Heart right ventricle (tissue), 16 donors: ENCODE measurements at regions of chr3 and their contacts with region 1.

Region 1: DNA sequence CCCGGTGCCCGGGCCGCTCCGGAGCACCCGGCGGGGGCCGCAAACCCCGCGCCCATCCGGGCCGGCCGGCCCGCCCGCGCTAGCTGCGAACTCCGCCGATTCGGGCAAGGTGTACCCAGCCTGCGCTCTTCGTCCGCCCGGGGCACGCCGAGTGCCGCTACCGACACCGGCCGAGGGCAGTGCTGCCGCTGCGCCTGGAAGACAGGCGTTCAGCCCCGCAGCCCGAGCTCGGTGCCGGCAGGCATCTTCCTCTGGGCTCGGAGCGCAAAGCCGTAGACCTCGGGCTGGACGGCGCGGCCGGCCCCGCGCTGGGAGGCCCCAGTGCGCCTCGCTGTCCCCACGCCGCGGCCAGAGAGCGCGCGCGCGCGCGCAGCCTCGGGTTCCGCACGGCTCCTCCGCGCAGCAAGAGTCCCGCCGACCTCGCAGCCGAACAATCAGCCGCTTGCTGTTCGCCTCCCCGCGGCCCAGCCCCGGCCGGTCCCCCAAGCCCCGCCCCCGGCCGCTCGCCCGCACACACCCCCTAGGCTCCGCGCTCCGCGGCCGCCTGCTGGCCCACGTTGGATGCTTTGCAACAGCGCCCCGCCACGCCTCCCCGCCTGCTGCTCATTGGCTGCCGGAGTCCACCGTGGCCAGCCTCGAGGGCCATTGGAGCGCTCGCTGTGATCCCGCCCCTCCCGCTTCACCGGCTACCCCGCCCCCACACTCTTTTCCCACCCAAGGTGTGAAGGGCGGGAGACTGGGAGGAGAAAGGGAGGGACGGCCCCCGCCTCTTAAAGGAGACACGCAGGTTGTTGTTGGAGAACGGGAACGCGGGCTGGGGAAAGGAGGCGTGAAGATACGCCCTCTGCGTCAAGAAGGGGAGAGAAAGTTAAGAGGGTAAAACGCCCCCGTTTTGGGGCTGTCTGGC is at the start of gene LRIG1:
- DNase-seq: peak; percentile 99 to 100
- ATAC-seq: peak; percentile 97 to 98 (median 98)
- H3K4me3 ChIP-seq: peak within 1 kb of the TSS; percentile 72 to 94 (median 90)
- H3K27ac ChIP-seq: peak within 1 kb of the TSS; percentile 88 to 96 (median 94)
- H3K4me1 ChIP-seq: peaks cover 4 to 44% (median 34%) of the 10 kb centered on the region in 9 donors
- H3K27me3 ChIP-seq: peaks cover 0 to 4% (median 0%) of the 10 kb centered on the region in 7 donors
- CTCF ChIP-seq: peak; percentile 30 to 73 (median 52)
- total RNA-seq, gene LRIG1: 71.9 to 109 (median 95.2) TPM

Region 2: DNA sequence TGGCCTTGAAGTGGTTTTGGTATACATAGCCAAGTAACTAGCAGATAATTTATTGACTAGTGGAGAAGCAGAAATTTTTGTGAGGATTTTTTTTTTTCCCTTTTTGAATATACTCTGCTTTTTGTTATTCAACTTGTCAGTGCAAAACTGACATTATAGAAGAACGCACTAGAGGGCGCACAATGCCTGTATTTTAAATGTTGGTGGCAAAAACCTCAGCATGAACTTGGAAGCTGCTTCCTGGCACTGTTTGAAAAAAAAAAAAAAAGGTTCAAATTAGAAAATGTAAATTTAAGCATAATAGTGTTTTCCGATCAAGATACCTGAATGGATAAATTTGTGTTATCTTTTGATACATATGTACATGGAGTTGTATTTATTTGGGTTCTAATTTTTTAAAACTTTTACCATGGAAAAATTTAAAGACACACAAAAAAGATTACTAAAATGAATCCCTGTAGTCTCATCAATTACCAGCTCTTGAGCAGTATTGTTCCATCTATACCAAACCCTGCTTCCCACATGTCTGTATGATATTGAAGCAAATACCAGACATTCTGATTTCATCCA is 224.0 kb before region 1 on chr3:
- intact Hi-C with region 1: loop called in 4 of 10 experiments (anchors 10 kb)
- DNase-seq: peak in 1 of 2 donors; percentile 75
- ATAC-seq: peak in 4 of 8 donors; percentile 38 to 79 (median 58)
- H3K4me3 ChIP-seq: no peak overlapping the region
- H3K27ac ChIP-seq: no peak overlapping the region
- H3K4me1 ChIP-seq: peaks cover 0 to 7% (median 0%) of the 10 kb centered on the region in 9 donors
- H3K27me3 ChIP-seq: no peaks in the 10 kb centered on the region
- CTCF ChIP-seq: peak; percentile 49 to 83 (median 73)

Region 3: GRCh38 chr3:66413151-66413751 is 87.6 kb before region 1 on chr3:
- intact Hi-C with region 1: loop called (anchors 1 to 10 kb)
- DNase-seq: no peak
- ATAC-seq: no peak
- H3K4me3 ChIP-seq: no peak overlapping the region
- H3K27ac ChIP-seq: peak overlapping the region in 7 of 10 donors; percentile 2 to 72 (median 56)
- H3K4me1 ChIP-seq: peaks cover 15 to 94% (median 58%) of the 10 kb centered on the region in 9 donors
- H3K27me3 ChIP-seq: no peaks in the 10 kb centered on the region
- CTCF ChIP-seq: no peak

Region 4: DNA sequence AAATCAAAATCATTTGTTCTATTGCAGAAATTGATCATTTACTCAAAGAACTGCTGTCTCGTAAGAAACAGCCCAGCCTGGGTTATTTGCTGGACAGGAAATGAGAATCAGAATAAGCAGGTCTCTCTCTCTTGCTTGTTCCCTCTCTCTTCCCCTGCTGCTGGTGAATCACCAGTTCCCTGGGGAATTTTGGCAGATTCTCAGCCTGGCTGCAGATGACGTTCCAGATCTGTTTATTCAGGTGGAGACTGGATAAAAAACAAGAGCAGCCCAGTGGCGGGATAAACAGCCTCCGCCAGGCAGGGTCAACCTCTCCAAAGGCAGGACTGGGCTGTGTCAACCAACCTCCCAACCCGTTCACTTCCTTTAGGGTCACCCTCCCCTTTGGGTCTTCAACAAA is 72.1 kb before region 1 on chr3:
- intact Hi-C with region 1: no loop called
- DNase-seq: peak; percentile 56 to 83
- ATAC-seq: peak; percentile 67 to 84 (median 77)
- H3K4me3 ChIP-seq: no peak overlapping the region
- H3K27ac ChIP-seq: peak overlapping the region; percentile 6 to 87 (median 64)
- H3K4me1 ChIP-seq: peaks cover 31 to 99% (median 86%) of the 10 kb centered on the region in 9 donors
- H3K27me3 ChIP-seq: no peaks in the 10 kb centered on the region
- CTCF ChIP-seq: no peak

Region 5: GRCh38 chr3:66442254-66443117 is 58.3 kb before region 1 on chr3:
- intact Hi-C with region 1: loop called in 2 of 10 experiments (anchors 5 to 10 kb)
- DNase-seq: peak; percentile 66 to 87
- ATAC-seq: peak; percentile 85 to 93 (median 90)
- H3K4me3 ChIP-seq: peak overlapping the region in 5 of 10 donors; percentile 8 to 25 (median 16)
- H3K27ac ChIP-seq: peak overlapping the region in 9 of 10 donors; percentile 54 to 86 (median 70)
- H3K4me1 ChIP-seq: peaks cover 35 to 88% (median 58%) of the 10 kb centered on the region in 9 donors
- H3K27me3 ChIP-seq: no peaks in the 10 kb centered on the region
- CTCF ChIP-seq: peak in 1 of 9 donors; percentile 11

Region 6: GRCh38 chr3:66609659-66610561 is 109.1 kb after region 1 on chr3:
- intact Hi-C with region 1: loop called in 1 of 10 experiments (anchors 10 kb)
- DNase-seq: no peak
- ATAC-seq: no peak
- H3K4me3 ChIP-seq: no peak overlapping the region
- H3K27ac ChIP-seq: no peak overlapping the region
- H3K4me1 ChIP-seq: no peaks in the 10 kb centered on the region
- H3K27me3 ChIP-seq: no peaks in the 10 kb centered on the region
- CTCF ChIP-seq: no peak

Region 7: GRCh38 chr3:66816090-66816761 is 315.4 kb after region 1 on chr3:
- intact Hi-C with region 1: loop called in 6 of 10 experiments (anchors 5 to 10 kb)
- DNase-seq: no peak
- ATAC-seq: peak; percentile 71 to 93 (median 78)
- H3K4me3 ChIP-seq: no peak overlapping the region
- H3K27ac ChIP-seq: no peak overlapping the region
- H3K4me1 ChIP-seq: peaks cover 0 to 5% (median 0%) of the 10 kb centered on the region in 9 donors
- H3K27me3 ChIP-seq: no peaks in the 10 kb centered on the region
- CTCF ChIP-seq: peak; percentile 53 to 85 (median 69)